Right lobe of liver (tissue), 6 donors: ENCODE measurements at regions of chr6 and their contacts with region 1.

Region 1: DNA sequence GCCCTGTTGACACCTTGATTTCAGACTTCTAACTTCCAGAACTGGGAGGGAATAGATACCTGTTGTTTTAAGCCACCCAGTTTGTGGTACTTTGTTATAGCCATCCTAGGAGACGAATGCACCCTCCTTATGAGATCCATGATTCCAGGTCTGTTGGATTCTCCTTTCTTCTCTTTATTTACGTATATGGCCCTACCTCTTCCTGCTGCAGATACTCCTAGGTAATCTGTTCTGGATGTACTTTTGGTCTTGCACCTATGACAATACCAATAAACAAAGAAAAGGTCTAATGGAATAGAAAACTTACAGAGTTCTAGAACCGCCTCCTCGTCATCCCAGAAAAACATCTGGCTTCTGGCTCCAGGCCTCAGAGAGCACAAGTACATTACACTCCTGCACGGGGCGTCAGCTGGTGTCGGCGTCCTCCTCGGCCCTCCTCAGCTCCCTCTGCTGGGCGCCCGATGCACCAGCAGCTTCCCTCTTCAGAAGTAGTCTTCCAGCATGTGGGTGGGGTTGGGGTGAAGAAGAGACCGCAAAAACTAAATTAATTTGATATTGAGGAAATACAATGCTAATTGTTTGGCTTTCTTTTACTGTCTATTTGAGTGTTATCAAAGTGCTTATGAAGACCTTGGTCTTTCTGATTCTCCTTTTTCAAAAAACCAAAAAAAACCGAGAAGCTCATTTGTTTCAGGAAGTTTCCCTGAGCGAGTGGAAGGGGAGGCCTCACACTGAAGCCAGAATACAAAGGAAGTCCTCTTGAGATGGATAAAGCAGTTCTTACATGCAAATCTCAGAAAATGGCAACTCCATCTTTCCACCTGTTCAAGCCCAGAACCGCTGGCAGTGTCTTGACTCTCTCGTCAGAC is 9.7 kb upstream of the ATXN1 start:
- DNase-seq: peak; percentile 82 to 88 (median 82)
- ATAC-seq: peak; percentile 95 to 98 (median 98)
- H3K4me3 ChIP-seq: no peak overlapping the region
- H3K27ac ChIP-seq: no peak overlapping the region
- H3K4me1 ChIP-seq: peaks cover 0 to 23% (median 0%) of the 10 kb centered on the region in 4 donors
- H3K27me3 ChIP-seq: no peaks in the 10 kb centered on the region
- CTCF ChIP-seq: peak; percentile 85 to 95 (median 94)
- POLR2A ChIP-seq: no peak

Region 2: GRCh38 chr6:16514249-16514648 is 256.7 kb before region 1 on chr6:
- intact Hi-C with region 1: loop called in 1 of 2 experiments (anchors 10 kb)
- DNase-seq: no peak
- ATAC-seq: peak; percentile 39 to 51 (median 46)
- H3K4me3 ChIP-seq: no peak overlapping the region
- H3K27ac ChIP-seq: no peak overlapping the region
- H3K4me1 ChIP-seq: no peaks in the 10 kb centered on the region
- H3K27me3 ChIP-seq: no peaks in the 10 kb centered on the region
- CTCF ChIP-seq: peak; percentile 31 to 53 (median 44)
- POLR2A ChIP-seq: no peak